Activated naive CD4-positive, alpha-beta T cell treated with anti-CD3 and anti-CD28 coated beads for 36 hours (primary cell): ENCODE measurements at regions of chrX and their contacts with region 1.

Region 1: DNA sequence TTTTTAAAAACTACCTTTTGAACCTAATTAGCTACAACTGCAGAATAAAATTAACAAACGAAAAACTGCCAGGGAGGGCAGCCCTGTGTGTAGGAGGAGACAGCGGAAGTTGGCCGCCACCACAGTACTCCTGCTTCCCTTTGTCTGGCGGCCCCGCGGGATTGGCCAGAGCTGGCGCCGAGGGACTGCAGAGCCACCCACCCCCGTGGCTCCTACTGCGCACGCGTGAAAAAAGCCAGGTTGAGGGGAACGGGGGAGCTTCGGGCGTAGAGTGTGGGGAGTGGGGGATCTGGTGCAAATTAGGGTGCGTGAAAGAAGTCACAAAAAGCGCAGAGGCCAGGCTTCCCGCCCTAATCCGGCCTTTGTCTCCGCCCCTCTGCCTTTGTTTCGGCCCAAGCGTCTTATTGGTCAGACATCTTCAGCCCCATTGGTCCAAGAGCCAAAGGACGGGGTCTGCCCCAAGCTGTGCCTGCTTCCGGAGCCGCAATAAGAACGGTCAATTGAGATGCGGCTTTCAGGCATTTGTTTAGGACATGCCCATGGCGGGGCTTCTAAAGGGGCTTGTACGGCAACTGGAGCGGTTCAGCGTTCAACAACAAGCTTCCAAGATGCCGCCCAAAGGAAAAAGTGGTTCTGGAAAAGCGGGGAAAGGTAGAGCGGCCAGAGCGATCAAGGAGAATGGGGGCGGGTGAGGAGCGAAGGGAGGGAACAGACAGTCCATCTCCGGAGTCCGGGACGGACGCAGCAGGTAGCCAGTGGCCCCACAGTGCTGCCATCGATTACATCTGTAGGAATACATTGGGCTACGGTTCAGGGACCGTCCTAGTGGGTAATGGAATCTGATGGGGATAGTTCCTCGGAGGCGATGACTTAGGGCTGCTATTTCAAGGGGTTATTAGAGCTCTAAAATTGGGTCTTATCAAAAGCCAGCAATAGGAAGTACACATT is at the start of gene PIN4:
- DNase-seq: peak; percentile 91
- H3K4me3 Mint-ChIP-seq: no peak within 1 kb of the TSS
- H3K27ac Mint-ChIP-seq: no peak within 1 kb of the TSS
- H3K4me1 Mint-ChIP-seq: peaks cover 11% of the 10 kb centered on the region
- H3K27me3 Mint-ChIP-seq: no peaks in the 10 kb centered on the region
- total RNA-seq, gene PIN4: 5.6 to 8.0 TPM

Region 2: GRCh38 chrX:72018277-72019112 is 163.0 kb before region 1 on chrX:
- CTCF ChIA-PET with region 1: interaction called, 3 read pairs
- intact Hi-C with region 1: loop called (anchors 1 kb)
- DNase-seq: peak; percentile 84
- H3K4me3 Mint-ChIP-seq: no peak overlapping the region
- H3K27ac Mint-ChIP-seq: no peak overlapping the region
- H3K4me1 Mint-ChIP-seq: peaks cover 25% of the 10 kb centered on the region
- H3K27me3 Mint-ChIP-seq: peaks cover 10% of the 10 kb centered on the region

Region 3: DNA sequence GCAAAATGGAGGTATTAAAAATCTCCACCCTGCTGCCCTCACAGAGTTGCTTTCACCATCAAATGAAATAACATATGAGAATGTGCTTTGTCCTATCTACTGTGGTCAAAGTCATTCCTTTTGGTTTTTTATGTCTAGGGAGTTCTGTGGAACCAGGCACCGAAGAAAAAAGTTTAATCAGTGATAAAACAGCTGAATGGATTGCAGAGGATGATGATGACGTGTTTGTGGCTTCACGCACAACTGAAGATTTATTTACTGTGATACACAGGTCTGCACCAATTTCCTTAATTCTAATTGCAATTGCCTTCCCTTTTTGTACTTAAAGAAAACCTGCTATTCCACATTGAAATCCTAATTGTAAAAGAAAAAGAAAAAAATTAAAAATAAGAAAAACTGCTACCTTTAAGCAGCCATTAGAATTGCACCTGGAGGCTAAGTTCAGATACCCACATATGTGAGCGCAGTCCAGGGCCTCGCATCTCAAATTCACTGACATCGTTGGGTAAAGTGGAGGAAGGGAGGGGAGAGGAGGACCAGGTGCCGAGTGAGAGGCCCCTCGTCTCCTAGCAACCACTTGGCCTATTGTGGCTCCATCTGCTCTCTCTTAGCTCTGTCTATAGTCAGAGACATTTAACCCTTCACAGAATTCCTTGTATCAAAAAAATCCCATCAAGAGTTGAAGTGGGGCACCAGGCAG is 39.2 kb before region 1 on chrX:
- CTCF ChIA-PET with region 1: no interaction called
- intact Hi-C with region 1: loop called (anchors 1 kb)
- DNase-seq: no peak
- H3K4me3 Mint-ChIP-seq: no peak overlapping the region
- H3K27ac Mint-ChIP-seq: no peak overlapping the region
- H3K4me1 Mint-ChIP-seq: peaks cover 18% of the 10 kb centered on the region
- H3K27me3 Mint-ChIP-seq: no peaks in the 10 kb centered on the region

Region 4: GRCh38 chrX:72238721-72239475 is 57.4 kb after region 1 on chrX and contains the start of gene ERCC6L:
- CTCF ChIA-PET with region 1: no interaction called
- intact Hi-C with region 1: loop called (anchors 1 kb)
- DNase-seq: peak; percentile 88
- H3K4me3 Mint-ChIP-seq: peak within 1 kb of the TSS; percentile 79
- H3K27ac Mint-ChIP-seq: peak within 1 kb of the TSS; percentile 74
- H3K4me1 Mint-ChIP-seq: peaks cover 13% of the 10 kb centered on the region
- H3K27me3 Mint-ChIP-seq: no peaks in the 10 kb centered on the region
- total RNA-seq, gene ERCC6L: 9.5 to 9.6 TPM

Region 5: GRCh38 chrX:72572248-72573157 is 391.1 kb after region 1 on chrX and contains the start of gene HDAC8:
- CTCF ChIA-PET with region 1: no interaction called
- intact Hi-C with region 1: loop called (anchors 1 kb)
- DNase-seq: peak; percentile 66
- H3K4me3 Mint-ChIP-seq: peak within 1 kb of the TSS; percentile 97
- H3K27ac Mint-ChIP-seq: peak within 1 kb of the TSS; percentile 91
- H3K4me1 Mint-ChIP-seq: peaks cover 7% of the 10 kb centered on the region
- H3K27me3 Mint-ChIP-seq: no peaks in the 10 kb centered on the region
- total RNA-seq, gene HDAC8: 14.8 to 16.8 TPM